Activated CD4-positive, alpha-beta memory T cell treated with anti-CD3 and anti-CD28 coated beads, Interleukin-2, amount 10 ng/mL, durations not matched to agents 7 days and 5 days (primary cell): ENCODE measurements at regions of chr6 and their contacts with region 1.

Region 1: DNA sequence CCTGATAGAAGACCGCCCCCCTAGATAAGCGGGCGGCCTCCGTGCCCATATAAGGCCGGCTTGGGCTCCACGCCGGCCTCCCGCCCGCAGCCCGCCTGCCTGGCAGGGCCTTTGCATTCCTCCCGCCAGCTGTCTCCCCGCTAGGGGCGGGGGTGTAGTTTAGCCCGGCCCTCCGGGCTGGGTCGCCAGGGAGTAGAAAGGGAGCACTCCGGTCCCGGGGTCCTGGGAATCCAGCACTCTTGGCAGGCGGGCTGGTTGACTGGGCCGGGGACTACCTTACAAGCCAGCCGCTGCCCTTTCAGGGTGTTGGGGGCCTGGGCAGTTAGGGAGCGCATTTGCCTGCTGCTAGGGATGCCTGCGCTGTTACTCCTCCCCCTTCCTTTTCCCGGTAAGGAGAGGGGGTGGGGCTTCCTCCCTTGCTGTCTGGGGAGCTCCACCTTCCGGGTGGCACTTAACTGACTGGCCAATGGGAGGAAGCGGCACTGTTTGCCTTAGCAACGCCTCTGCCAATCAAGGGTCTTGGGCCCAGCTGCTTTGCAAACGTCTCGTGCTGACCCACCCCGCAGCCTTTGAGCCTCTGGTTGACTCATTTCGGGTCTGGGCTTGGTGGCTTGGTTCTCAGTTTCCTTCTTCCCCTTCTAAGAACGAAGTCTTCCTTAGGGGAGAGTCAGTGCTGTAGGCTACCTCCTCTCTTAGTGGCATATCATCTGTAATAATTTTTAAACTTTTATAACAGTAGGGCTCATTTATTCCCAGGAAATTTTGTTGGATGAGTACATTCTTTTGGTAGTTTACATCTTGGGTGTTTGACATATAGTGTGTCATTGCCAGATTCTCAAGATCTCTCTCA is 3.4 kb downstream of the SRF start:
- DNase-seq: peak; percentile 98
- H3K4me3 Mint-ChIP-seq: peak overlapping the region; percentile 95
- H3K27ac Mint-ChIP-seq: peak overlapping the region; percentile 87
- H3K4me1 Mint-ChIP-seq: peaks cover 51% of the 10 kb centered on the region
- H3K27me3 Mint-ChIP-seq: no peaks in the 10 kb centered on the region

Region 2: GRCh38 chr6:43193939-43194338 is 19.5 kb after region 1 on chr6:
- CTCF ChIA-PET with region 1: no interaction called
- POLR2A ChIA-PET with region 1: no interaction called
- DNase-seq: no peak
- H3K4me3 Mint-ChIP-seq: no peak overlapping the region
- H3K27ac Mint-ChIP-seq: no peak overlapping the region
- H3K4me1 Mint-ChIP-seq: peaks cover 6% of the 10 kb centered on the region
- H3K27me3 Mint-ChIP-seq: no peaks in the 10 kb centered on the region

Region 3: DNA sequence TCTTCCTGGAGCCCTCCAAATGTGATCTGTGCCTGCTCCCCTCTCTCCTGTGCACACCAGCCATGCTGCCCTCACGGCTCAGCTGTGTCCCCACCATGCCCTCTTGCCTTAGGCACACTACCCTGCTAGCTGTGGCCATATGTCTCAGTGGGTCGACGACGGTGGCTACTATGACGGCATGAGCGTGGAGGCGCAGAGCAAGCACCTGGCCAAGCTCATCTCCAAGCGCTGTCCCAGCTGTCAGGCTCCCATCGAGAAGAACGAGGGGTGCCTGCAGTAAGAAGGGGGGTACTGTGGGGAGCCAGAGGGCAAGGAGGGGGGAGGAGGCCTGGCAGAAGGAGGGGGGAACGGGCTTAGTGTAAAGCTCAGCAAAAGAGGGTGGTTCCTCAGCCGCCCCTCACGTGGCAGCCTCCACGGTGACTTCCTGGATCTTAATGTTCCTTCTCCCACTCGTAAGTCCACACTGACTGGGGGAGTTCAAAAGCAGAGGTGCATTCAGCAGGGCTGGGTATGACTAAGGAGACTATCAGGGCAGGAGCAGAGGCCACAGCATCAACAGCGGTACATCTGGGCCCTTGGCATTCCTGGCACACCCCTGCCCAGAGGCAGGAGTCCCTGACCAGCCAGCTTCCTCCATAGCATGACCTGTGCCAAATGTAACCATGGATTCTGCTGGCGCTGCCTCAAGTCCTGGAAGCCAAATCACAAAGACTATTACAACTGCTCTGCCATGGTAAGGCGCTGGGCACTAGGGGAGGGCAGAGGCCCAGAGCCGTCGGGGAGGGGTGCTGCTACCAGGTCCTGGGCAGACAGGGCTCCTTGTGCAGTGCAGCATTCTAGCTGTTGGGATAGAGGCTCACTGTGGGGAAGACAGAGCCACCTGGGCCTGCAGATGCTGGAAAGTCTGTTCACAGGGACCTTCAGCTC is 46.8 kb after region 1 on chr6:
- CTCF ChIA-PET with region 1: no interaction called
- POLR2A ChIA-PET with region 1: interaction called, 21 read pairs
- DNase-seq: no peak
- H3K4me3 Mint-ChIP-seq: no peak overlapping the region
- H3K27ac Mint-ChIP-seq: no peak overlapping the region
- H3K4me1 Mint-ChIP-seq: peaks cover 29% of the 10 kb centered on the region
- H3K27me3 Mint-ChIP-seq: no peaks in the 10 kb centered on the region